B cell (primary cell): ENCODE measurements at regions of chr6 and their contacts with region 1.

Region 1: GRCh38 chr6:12119085-12119588 is 107.0 kb downstream of the HIVEP1 start:
- DNase-seq: peak; percentile 76
- ATAC-seq: peak; percentile 71
- H3K4me3 ChIP-seq: no peak overlapping the region
- H3K4me3 Mint-ChIP-seq: peak overlapping the region; percentile 14
- H3K27ac ChIP-seq: peak overlapping the region; percentile 16 to 45
- H3K27ac Mint-ChIP-seq: peak overlapping the region; percentile 72
- H3K4me1 ChIP-seq: peaks cover 21 to 38% of the 10 kb centered on the region in 2 donors
- H3K4me1 Mint-ChIP-seq: peaks cover 48% of the 10 kb centered on the region
- H3K27me3 ChIP-seq: no peaks in the 10 kb centered on the region
- H3K27me3 Mint-ChIP-seq: no peaks in the 10 kb centered on the region
- CTCF ChIP-seq: no peak

Region 2: DNA sequence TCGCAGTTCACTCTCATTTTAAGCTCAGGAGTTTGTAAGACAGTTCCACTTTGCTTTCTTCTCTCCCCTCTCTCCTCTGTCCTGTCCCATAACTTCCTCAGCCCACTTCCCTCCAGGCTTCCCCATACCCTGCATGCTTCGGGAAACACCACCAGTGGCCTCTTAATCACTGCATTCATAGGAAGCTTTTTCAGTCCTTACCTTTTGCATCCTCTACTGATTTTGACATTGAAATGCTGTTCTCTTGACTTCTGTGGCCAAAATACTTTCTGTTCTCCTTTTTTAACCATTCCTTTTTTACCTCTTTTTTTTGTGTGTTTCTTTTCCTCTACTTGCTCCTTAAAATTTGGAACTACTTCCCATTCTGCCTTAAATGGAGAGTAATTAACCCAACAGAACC is 37.4 kb before region 1 on chr6:
- CTCF ChIA-PET with region 1: no interaction called
- POLR2A ChIA-PET with region 1: no interaction called
- intact Hi-C with region 1: loop called (anchors 5 kb)
- DNase-seq: peak; percentile 26
- ATAC-seq: no peak
- H3K4me3 ChIP-seq: no peak overlapping the region
- H3K4me3 Mint-ChIP-seq: peak overlapping the region; percentile 58
- H3K27ac ChIP-seq: no peak overlapping the region
- H3K27ac Mint-ChIP-seq: peak overlapping the region; percentile 65
- H3K4me1 ChIP-seq: peaks cover 14 to 25% of the 10 kb centered on the region in 2 donors
- H3K4me1 Mint-ChIP-seq: peaks cover 46% of the 10 kb centered on the region
- H3K27me3 ChIP-seq: no peaks in the 10 kb centered on the region
- H3K27me3 Mint-ChIP-seq: no peaks in the 10 kb centered on the region
- CTCF ChIP-seq: no peak